ENCODE measurements at regions of chr15 and their contacts with region 1.

Region 1: DNA sequence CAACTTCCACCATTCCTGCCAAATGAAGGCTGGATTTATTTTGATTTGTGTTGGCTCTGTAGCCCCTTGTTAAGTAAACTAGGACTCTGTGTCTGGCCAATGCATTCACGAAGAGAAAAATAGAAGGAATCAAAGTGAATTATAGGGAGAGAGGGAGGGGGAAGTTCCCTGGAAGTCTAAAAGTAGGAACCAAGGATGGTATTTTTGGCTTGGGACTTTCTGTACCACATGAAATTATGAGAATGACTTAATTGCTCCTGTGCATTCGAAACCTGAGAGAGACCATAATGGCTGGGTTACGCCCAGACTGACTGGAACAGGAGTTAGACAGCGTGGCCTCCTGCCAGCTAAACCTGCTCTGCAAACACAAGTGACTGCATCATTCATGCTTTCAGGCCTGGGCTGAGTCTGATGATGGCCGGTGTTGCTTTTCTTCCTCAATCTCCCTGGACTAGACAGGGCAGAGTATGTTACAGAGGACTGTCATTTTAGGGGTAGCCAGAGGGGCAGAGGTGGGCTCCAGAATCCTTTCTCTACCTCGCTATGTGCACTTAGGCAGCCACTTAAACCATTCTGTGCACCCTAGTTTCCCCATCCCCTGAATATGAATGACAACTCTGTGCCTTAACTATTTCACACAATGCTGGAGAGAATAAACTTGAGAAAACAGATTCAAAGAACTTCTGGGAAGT is 58.9 kb downstream of the MYO1E start:
- DNase-seq: peak; percentile 87 to 96
- H3K4me3 ChIP-seq: no peak overlapping the region
- H3K27ac ChIP-seq: peak overlapping the region; percentile 77 to 83
- H3K4me1 ChIP-seq: peaks cover 29 to 50% of the 10 kb centered on the region in 2 donors
- H3K27me3 ChIP-seq: no peaks in the 10 kb centered on the region
- CTCF ChIP-seq: no peak

Region 2: GRCh38 chr15:57692709-57693108 is 1621.1 kb before region 1 on chr15:
- intact Hi-C with region 1: loop called (anchors 10 kb)
- DNase-seq: no peak
- H3K4me3 ChIP-seq: no peak overlapping the region
- H3K27ac ChIP-seq: peak overlapping the region; percentile 77 to 85
- H3K4me1 ChIP-seq: peaks cover 8 to 41% of the 10 kb centered on the region in 2 donors
- H3K27me3 ChIP-seq: no peaks in the 10 kb centered on the region
- CTCF ChIP-seq: no peak

Region 3: DNA sequence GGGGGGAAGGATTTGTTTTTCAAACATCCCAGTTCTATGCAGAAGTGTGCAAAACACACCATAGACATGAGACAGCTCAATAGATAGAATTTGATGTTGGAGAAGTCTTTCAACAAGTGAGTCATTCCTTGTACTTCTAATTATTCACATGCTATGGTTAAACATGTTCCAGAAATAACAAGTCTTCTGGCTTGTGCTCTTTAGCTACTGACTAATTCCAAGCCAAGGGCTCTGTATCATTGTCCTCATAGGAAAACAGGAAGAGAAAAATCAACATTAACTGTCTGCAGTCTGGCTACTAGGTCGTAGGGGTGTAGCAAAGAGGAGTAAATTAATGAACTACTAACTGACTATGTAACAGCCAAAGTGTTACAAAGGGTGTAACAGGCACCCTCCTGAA is 81.3 kb before region 1 on chr15:
- intact Hi-C with region 1: loop called (anchors 5 kb)
- DNase-seq: no peak
- H3K4me3 ChIP-seq: no peak overlapping the region
- H3K27ac ChIP-seq: peak overlapping the region; percentile 32 to 46
- H3K4me1 ChIP-seq: peaks cover 0 to 16% of the 10 kb centered on the region in 2 donors
- H3K27me3 ChIP-seq: no peaks in the 10 kb centered on the region
- CTCF ChIP-seq: no peak

Region 4: DNA sequence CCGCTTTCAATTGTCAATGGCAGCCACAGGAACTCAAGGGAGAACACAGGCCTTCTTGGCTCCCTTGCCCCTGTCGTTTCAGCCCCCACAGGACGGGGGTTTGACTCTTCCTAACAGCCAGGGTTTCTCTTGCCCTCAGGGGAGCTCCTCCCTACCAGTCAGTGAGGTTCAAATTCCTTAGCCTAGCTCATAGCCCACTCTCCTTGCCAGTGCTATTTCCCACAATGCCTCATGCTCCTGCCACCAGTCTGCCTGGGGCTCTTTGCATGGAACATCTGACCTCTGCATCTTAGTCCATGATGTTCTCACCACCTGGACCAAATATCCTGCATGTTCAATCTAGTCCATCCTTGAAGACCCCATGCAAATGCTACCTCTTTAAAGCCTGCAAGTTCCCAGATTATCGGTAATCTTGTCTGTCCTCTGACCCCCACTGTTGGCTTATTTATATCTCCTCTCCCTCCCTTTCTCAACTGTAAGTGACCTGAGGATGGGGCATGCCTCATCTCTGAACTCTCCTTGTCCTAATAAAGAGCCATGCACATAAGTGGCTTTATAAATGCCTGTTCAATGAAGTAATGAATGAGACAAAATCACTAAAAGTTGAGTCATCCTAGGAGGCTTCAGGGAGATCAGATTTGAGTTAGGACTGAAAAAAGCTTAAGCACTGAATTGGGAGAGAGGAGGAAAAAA is 19.1 kb before region 1 on chr15:
- intact Hi-C with region 1: loop called (anchors 1 kb)
- DNase-seq: no peak
- H3K4me3 ChIP-seq: peak overlapping the region in 1 of 2 donors; percentile 18
- H3K27ac ChIP-seq: peak overlapping the region; percentile 88
- H3K4me1 ChIP-seq: peaks cover 24 to 40% of the 10 kb centered on the region in 2 donors
- H3K27me3 ChIP-seq: no peaks in the 10 kb centered on the region
- CTCF ChIP-seq: no peak

Region 5: DNA sequence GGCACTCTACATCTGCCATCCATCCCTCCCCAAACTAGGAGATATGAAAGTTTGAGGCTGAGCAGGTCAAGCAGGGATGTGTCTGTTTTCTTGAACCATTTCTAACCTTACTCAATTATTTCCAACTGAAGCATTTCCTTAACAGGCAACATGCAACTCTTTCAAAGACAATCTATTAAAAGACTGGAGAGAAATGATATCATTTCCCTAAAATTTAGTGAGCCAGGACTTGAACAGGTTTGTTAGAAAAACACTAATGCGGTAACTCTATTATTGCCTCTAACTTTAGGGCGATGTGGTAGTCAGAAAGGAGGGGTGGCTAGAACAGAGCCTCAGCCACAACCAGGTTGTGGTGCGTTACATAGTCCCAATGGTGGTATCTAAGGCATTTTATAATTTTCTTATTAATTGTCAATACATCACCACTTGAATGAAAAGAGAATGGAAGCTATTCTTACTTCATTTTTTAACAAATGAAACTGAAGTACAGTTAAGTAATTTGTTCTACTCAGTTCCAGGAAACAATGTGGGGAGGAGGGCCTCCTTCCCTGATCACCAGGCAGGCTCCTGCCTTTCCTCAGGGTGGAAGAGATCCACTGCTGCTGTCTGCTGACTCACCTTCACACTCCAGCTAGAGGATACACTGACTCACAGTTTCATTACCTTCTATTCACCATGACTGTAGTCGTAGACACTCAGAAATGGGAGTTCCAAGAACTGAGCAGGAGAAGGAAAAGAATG is 36.1 kb after region 1 on chr15:
- intact Hi-C with region 1: loop called (anchors 2 kb)
- DNase-seq: peak; percentile 27 to 83
- H3K4me3 ChIP-seq: no peak overlapping the region
- H3K27ac ChIP-seq: peak overlapping the region; percentile 69 to 82
- H3K4me1 ChIP-seq: peaks cover 5 to 36% of the 10 kb centered on the region in 2 donors
- H3K27me3 ChIP-seq: no peaks in the 10 kb centered on the region
- CTCF ChIP-seq: no peak

Region 6: DNA sequence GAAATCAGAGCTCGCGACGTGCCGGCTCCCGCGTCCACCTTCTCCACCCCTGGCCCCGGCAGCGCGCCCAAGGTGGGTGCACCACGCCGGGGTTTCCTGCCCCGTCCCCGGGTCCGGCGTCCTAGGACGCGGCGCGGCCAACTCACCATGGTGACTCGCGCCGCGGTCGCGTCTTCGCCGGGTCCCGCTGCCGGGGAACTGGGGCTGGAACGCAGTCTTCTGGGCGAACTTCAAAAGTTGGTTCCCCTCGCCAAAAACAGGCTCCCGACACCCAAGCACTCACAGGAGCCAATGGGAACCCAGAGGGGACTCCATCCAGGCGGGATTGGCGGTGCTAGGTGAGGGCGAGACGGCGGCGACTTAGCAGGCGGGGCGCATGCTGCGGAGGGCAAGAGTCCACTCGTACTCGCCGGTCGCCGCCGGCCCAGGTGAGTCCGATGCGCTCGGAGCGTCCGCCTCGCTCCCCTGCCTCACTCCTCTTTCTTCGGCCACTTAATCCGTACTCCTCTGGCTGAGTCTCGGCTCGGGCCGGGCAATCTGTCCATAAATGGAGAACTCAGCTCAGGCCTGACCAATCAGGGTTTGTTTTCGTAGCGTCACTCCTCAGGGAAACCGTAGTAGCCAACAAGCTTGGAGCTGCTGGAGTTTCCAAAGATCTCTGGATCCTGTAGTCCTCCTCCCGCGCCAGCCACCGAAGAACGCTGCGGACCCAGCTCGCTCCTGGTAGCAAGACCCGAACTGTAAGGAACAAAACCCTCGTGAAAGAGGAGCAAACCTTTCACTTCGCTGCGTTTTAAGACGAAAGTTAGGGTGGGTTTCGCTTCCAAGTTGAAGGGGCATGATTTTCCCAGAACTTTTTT is 58.8 kb after region 1 on chr15 and contains the start of gene MYO1E:
- intact Hi-C with region 1: loop called (anchors 1 kb)
- DNase-seq: peak; percentile 78 to 95
- H3K4me3 ChIP-seq: peak within 1 kb of the TSS; percentile 73 to 99
- H3K27ac ChIP-seq: peak within 1 kb of the TSS; percentile 91 to 99
- H3K4me1 ChIP-seq: no peaks in the 10 kb centered on the region
- H3K27me3 ChIP-seq: no peaks in the 10 kb centered on the region
- CTCF ChIP-seq: no peak
- total RNA-seq, gene MYO1E: 48.0 TPM